Heart left ventricle (tissue), 16 donors: ENCODE measurements at regions of chr9 and their contacts with region 1.

Region 1: DNA sequence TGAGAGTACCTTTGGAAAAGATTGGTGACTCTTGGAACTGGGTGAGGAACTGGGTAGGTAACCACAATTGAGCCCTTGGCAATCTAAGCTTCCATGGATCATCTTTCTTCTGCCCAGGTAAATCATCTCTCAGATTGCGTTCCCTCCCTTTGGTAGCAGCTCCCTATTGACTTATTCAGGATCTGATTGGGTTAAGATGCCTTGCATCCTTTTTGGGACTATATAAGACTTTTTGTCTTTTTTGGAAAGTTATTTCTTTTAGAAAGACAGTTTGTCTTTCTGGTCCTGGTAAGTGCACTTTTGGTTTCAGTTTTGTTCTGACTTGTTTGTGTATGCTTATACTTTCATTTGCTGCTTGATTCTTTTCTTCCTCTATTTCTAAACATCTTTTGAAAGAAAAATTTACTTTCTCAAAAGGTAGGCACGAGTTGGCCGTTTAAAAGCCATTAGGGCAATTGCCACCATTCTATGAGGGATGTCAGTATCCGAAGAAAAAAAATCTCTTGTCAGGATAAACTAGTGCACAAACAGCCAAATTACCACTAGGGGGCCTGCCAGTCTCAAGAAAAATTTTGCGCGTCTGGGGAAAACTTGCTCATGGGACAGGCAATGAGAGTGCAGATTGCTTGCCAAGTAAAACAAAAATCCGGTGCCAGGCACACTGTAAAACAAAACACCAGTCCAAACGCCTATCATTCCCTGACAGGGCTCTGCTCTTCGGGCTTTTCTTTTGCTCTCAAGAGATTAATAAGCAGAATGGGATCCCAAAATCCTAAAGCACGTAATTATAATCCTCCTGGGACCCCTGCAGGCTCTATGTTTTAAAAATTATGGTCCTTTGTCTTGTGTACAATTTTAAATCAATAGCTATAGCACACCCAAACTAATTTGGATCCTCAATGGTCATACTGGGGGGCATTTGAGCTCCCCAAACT is 12.8 kb downstream of the OR1J1 start:
- DNase-seq: peak in 4 of 5 donors; percentile 66 to 72 (median 67)
- ATAC-seq: peak; percentile 69 to 85 (median 81)
- H3K4me3 ChIP-seq: peak overlapping the region in 10 of 12 donors; percentile 23 to 60 (median 48)
- H3K27ac ChIP-seq: peak overlapping the region in 3 of 12 donors; percentile 14 to 78 (median 39)
- H3K4me1 ChIP-seq: peaks cover 0 to 14% (median 5%) of the 10 kb centered on the region in 12 donors
- H3K27me3 ChIP-seq: peaks cover 0 to 16% (median 0%) of the 10 kb centered on the region in 9 donors
- CTCF ChIP-seq: peak; percentile 71 to 88 (median 82)
- POLR2A ChIP-seq: no peak

Region 2: GRCh38 chr9:122978601-122979000 is 513.7 kb after region 1 on chr9:
- intact Hi-C with region 1: loop called in 2 of 10 experiments (anchors 10 kb)
- DNase-seq: no peak
- ATAC-seq: no peak
- H3K4me3 ChIP-seq: no peak overlapping the region
- H3K27ac ChIP-seq: no peak overlapping the region
- H3K4me1 ChIP-seq: peaks cover 0 to 28% (median 16%) of the 10 kb centered on the region in 12 donors
- H3K27me3 ChIP-seq: no peaks in the 10 kb centered on the region
- CTCF ChIP-seq: no peak
- POLR2A ChIP-seq: no peak